Ovary (tissue), 10 donors: ENCODE measurements at regions of chr12 and their contacts with region 1.

Region 1: DNA sequence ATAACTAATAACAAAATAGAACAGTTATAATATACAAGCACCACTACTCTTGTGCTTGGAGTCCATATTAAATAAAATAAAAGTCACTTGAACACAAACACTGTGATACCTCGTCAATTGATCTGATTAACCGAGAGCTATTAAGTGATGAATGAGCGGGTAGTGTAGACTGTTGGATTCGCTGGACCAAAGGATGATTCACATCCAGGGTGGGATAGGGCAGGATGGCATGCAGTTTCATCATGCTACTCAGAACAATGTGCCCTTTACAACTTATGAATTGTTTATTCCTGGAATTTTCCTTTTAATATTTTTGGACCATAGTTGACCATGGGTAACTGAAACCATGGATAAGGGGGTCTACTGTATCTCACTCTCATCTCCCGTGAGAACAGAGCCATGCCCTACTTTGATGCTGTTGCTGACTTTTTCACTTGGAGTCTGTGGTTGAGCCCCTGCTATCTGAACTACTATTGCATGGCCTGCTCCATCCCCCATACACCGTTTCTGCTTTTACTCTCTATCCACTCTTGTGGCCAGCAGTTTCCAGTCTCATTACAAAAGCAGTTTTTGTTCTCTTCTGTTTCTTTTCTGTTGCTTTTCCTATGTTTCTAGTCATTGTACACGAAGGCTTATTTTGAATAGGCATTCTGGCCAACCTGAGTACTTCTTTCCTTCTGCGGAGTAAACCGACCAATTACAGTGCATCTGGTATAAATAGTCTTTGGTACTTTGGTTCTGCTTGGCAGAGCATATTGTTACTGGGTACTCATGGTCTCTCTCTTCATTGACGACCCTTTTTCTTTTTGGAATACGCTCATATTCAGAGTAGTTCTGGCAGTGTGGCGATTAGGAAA is 12.2 kb downstream of the TMTC2 start:
- DNase-seq: no peak
- H3K4me3 ChIP-seq: no peak overlapping the region
- H3K27ac ChIP-seq: no peak overlapping the region
- H3K4me1 ChIP-seq: no peaks in the 10 kb centered on the region
- H3K27me3 ChIP-seq: no peaks in the 10 kb centered on the region
- CTCF ChIP-seq: no peak
- EP300 ChIP-seq: no peak
- POLR2A ChIP-seq: no peak

Region 2: DNA sequence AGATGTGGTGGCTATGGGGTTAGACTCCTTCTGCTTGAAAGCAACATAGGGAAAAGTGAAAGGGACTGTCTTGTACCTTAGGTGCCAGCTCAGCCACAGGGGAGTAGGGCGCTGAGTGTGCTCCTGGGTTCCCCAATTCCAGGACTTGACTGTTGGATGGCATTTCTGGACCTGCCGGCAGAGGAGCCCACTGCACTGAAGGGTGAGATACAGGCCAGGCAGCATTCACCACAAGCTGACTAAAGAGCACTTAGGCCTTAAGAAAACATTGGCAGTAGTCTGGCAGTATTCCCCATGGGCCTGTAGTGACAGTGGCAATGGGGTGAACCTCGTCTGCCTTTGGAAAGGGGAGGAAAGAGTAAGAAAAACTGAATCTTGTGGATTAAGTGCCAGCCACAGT is 79.3 kb before region 1 on chr12:
- intact Hi-C with region 1: no loop called
- DNase-seq: no peak
- H3K4me3 ChIP-seq: no peak overlapping the region
- H3K27ac ChIP-seq: no peak overlapping the region
- H3K4me1 ChIP-seq: no peaks in the 10 kb centered on the region
- H3K27me3 ChIP-seq: no peaks in the 10 kb centered on the region
- CTCF ChIP-seq: no peak
- EP300 ChIP-seq: no peak
- POLR2A ChIP-seq: no peak

Region 3: DNA sequence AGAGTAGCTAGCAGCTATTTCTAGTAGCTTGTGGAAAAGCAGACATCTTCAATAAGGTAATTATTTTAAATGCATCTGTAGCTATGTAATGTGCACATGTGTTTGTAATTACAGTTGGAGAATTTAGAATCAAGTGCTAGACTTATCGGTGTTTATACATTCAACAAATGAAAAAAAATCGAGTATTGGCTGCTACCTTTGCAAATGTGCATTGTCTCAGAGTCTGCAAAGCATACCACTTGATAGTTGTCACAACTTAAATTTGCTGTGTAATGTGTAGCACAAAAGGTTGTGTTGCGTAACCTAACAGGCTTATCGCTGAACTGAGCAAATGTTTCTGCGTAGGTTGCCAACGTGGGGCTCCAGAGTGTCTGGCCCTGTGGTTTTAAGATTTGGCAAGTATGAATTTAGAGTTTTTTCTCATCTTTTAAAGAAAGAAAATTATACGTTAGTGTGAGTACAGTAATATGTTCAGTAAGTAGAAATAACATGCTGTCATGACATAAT is 32.1 kb after region 1 on chr12:
- intact Hi-C with region 1: loop called in 1 of 4 experiments (anchors 2 kb)
- DNase-seq: peak in 1 of 5 donors; percentile 12
- H3K4me3 ChIP-seq: no peak overlapping the region
- H3K27ac ChIP-seq: no peak overlapping the region
- H3K4me1 ChIP-seq: no peaks in the 10 kb centered on the region
- H3K27me3 ChIP-seq: no peaks in the 10 kb centered on the region
- CTCF ChIP-seq: no peak
- EP300 ChIP-seq: no peak
- POLR2A ChIP-seq: no peak